Caco-2 (cell line): ENCODE measurements at regions of chr12 and their contacts with region 1.

Region 1: GRCh38 chr12:26097046-26097878 is 27.6 kb downstream of the BHLHE41 start:
- DNase-seq: peak; percentile 82 to 87
- H3K4me3 ChIP-seq: no peak overlapping the region
- H3K4me3 Mint-ChIP-seq: no peak overlapping the region
- H3K27ac Mint-ChIP-seq: no peak overlapping the region
- H3K4me1 ChIP-seq: peaks cover 54% of the 10 kb centered on the region
- H3K4me1 Mint-ChIP-seq: peaks cover 41% of the 10 kb centered on the region
- H3K27me3 ChIP-seq: no peaks in the 10 kb centered on the region
- H3K27me3 Mint-ChIP-seq: no peaks in the 10 kb centered on the region
- CTCF ChIP-seq: peak; percentile 96 to 98

Region 2: DNA sequence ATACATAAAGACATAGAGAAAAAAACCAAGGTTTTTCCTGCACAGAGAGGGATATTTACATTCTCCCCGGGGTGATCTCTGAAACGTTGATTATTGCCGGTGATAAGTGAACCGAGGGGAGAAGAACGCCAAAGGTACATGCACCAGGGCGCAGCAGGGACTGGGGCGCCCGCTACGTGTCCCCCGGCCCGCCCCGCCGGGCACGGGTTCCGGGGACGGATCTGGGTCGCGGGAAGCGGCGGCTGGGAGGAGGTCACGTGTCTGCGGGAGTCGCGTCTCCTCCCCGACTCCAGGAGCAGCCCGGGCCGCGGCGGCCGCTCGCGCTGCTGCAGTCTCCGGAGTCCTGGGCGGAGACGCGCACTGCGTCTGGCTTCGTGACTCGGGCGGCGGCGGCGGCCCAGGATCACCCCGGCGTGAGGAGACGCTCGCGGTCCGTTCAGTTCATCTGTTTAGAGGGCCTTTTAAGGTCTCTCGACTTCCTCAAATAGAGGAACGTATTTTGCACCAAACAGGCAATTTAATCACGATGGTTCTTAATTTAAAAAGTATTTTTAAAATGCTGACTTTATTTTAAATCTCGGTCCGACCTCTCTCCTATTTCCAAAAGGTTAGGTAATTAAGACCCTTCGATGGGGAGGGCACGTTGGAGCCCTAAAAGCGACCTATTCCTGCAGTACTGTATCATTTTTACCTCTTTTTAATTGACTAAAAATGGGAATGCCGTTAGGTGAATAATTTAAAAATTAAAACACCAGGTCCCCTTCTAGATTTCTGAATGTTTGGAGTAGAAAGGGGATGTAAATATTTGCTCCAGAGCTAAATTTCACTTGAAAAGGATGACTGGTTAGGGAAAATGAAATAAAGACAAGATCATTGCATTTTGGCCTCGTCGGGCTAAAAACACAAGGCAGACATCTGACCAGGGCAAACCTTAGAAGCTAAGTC is 29.4 kb after region 1 on chr12:
- CTCF ChIA-PET with region 1: interaction called, 3 read pairs
- POLR2A ChIA-PET with region 1: no interaction called
- intact Hi-C with region 1: loop called (anchors 1 kb)
- DNase-seq: peak; percentile 86 to 89
- H3K4me3 ChIP-seq: peak overlapping the region; percentile 59
- H3K4me3 Mint-ChIP-seq: peak overlapping the region; percentile 88
- H3K27ac Mint-ChIP-seq: peak overlapping the region; percentile 71
- H3K4me1 ChIP-seq: peaks cover 20% of the 10 kb centered on the region
- H3K4me1 Mint-ChIP-seq: peaks cover 21% of the 10 kb centered on the region
- H3K27me3 ChIP-seq: peaks cover 11% of the 10 kb centered on the region
- H3K27me3 Mint-ChIP-seq: peaks cover 34% of the 10 kb centered on the region
- CTCF ChIP-seq: no peak

Region 3: GRCh38 chr12:26188127-26188526 is 90.9 kb after region 1 on chr12:
- CTCF ChIA-PET with region 1: no interaction called
- POLR2A ChIA-PET with region 1: no interaction called
- intact Hi-C with region 1: loop called (anchors 5 kb)
- DNase-seq: no peak
- H3K4me3 ChIP-seq: no peak overlapping the region
- H3K4me3 Mint-ChIP-seq: no peak overlapping the region
- H3K27ac Mint-ChIP-seq: no peak overlapping the region
- H3K4me1 ChIP-seq: no peaks in the 10 kb centered on the region
- H3K4me1 Mint-ChIP-seq: peaks cover 6% of the 10 kb centered on the region
- H3K27me3 ChIP-seq: no peaks in the 10 kb centered on the region
- H3K27me3 Mint-ChIP-seq: no peaks in the 10 kb centered on the region
- CTCF ChIP-seq: no peak

Region 4: DNA sequence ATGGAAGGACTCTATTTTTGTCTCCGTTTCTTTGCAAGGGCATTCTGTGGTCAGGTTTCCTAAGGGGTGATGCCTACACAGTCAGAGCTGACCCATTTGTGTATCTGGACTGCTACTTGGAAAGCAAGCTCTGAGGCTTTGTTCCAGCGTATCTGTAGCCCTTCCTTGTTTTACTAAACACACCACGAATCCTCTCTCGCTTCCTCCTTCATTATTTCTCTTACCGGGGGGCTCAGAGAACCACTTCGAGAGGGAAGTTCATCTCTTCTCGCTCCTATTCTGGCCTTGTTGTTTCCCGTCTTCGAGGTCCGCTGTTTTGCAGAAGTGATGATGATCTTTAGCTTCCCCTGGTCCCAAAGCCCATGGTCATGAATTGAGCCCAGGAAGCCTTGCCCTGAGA is 262.8 kb after region 1 on chr12:
- CTCF ChIA-PET with region 1: no interaction called
- POLR2A ChIA-PET with region 1: no interaction called
- intact Hi-C with region 1: loop called (anchors 5 kb)
- DNase-seq: no peak
- H3K4me3 ChIP-seq: no peak overlapping the region
- H3K4me3 Mint-ChIP-seq: no peak overlapping the region
- H3K27ac Mint-ChIP-seq: no peak overlapping the region
- H3K4me1 ChIP-seq: peaks cover 12% of the 10 kb centered on the region
- H3K4me1 Mint-ChIP-seq: peaks cover 6% of the 10 kb centered on the region
- H3K27me3 ChIP-seq: no peaks in the 10 kb centered on the region
- H3K27me3 Mint-ChIP-seq: no peaks in the 10 kb centered on the region
- CTCF ChIP-seq: no peak

Region 5: DNA sequence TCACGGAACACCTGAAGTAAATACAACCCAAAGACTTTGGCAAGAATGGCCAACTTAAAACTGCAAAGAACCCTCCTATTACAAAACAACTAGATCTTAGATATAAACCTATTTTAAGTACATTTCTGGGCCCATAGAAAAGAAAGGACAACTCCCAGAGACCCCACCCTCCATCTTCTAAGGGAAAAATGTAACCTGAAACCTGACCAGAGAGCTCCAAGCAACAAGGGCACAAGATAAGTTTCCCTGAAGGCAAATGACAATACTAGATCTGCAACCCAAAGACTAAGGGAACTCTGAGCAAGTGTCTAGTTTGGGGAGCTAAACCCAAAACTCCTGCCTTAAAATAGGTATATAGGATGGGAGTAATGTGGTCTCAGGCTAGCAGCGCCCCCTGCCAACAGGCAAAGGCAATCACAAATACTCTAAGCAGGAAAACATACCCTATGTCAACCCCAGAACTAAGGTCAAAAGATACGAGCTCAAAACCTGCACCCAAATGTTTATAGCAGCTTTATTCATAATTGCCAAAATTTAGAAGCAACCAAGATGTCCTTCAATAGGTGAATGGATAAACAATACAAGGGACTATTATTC is 516.9 kb after region 1 on chr12:
- CTCF ChIA-PET with region 1: no interaction called
- POLR2A ChIA-PET with region 1: no interaction called
- intact Hi-C with region 1: loop called (anchors 2 kb)
- DNase-seq: peak in 1 of 2 experiments; percentile 50
- H3K4me3 ChIP-seq: no peak overlapping the region
- H3K4me3 Mint-ChIP-seq: no peak overlapping the region
- H3K27ac Mint-ChIP-seq: peak overlapping the region; percentile 26
- H3K4me1 ChIP-seq: peaks cover 5% of the 10 kb centered on the region; the same call in 1 of the 2 replicates
- H3K4me1 Mint-ChIP-seq: peaks cover 15% of the 10 kb centered on the region
- H3K27me3 ChIP-seq: no peaks in the 10 kb centered on the region
- H3K27me3 Mint-ChIP-seq: no peaks in the 10 kb centered on the region
- CTCF ChIP-seq: peak; percentile 61 to 65

Region 6: DNA sequence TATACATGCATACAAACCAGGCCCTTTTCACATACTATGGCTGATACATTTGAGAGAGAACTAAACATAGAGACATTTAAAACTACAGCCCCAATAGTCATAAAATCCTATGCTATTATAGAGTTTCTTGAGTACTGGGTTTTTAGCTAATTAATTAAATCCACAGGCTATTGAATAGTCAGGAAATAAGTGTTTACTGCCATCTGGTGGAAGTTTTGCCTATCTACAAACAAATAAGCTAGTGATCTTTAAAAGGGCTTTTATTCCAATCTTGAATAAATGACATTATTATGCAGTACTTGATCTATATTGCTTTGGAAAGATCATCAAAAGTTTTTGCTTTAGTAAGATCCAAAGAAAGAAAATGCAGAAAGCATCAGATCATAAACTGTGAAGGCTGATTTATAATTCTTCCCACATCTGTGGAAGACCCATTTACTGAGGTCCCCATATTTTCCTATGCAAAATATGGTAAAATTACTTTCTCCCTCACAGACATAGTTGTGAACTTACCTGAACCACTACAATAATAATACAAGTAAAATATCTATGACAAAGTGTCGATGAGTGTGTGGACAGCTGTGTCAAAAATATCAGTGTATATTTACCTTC is 604.4 kb after region 1 on chr12:
- CTCF ChIA-PET with region 1: interaction called, 7 read pairs
- POLR2A ChIA-PET with region 1: no interaction called
- intact Hi-C with region 1: loop called (anchors 1 kb)
- DNase-seq: peak in 1 of 2 experiments; percentile 30
- H3K4me3 ChIP-seq: no peak overlapping the region
- H3K4me3 Mint-ChIP-seq: no peak overlapping the region
- H3K27ac Mint-ChIP-seq: no peak overlapping the region
- H3K4me1 ChIP-seq: peaks cover 23% of the 10 kb centered on the region
- H3K4me1 Mint-ChIP-seq: peaks cover 6% of the 10 kb centered on the region
- H3K27me3 ChIP-seq: no peaks in the 10 kb centered on the region
- H3K27me3 Mint-ChIP-seq: no peaks in the 10 kb centered on the region
- CTCF ChIP-seq: peak; percentile 61 to 71